CD8-positive, alpha-beta T cell (primary cell): ENCODE measurements at regions of chr18 and their contacts with region 1.

Region 1: GRCh38 chr18:69958422-69958821 is 10.7 kb upstream of the CD226 start:
- DNase-seq: peak in 2 of 9 experiments; percentile 22 to 39
- ATAC-seq: no peak
- H3K4me3 ChIP-seq: no peak overlapping the region
- H3K4me3 Mint-ChIP-seq: no peak overlapping the region
- H3K27ac ChIP-seq: no peak overlapping the region
- H3K27ac Mint-ChIP-seq: no peak overlapping the region
- H3K4me1 ChIP-seq: peaks cover 23% of the 10 kb centered on the region
- H3K4me1 Mint-ChIP-seq: peaks cover 25% of the 10 kb centered on the region
- H3K27me3 ChIP-seq: no peaks in the 10 kb centered on the region
- H3K27me3 Mint-ChIP-seq: no peaks in the 10 kb centered on the region
- CTCF ChIP-seq: no peak

Region 2: GRCh38 chr18:69935319-69936190 is 22.9 kb before region 1 on chr18:
- CTCF ChIA-PET with region 1: interaction called, 9 read pairs
- POLR2A ChIA-PET with region 1: interaction called, 8 read pairs
- intact Hi-C with region 1: loop called in 1 of 2 experiments (anchors 1 kb)
- DNase-seq: peak; percentile 64 to 95 (median 80)
- ATAC-seq: peak; percentile 96
- H3K4me3 ChIP-seq: peak overlapping the region; percentile 1 to 18
- H3K4me3 Mint-ChIP-seq: no peak overlapping the region
- H3K27ac ChIP-seq: peak overlapping the region; percentile 25 to 63
- H3K27ac Mint-ChIP-seq: no peak overlapping the region
- H3K4me1 ChIP-seq: peaks cover 75% of the 10 kb centered on the region
- H3K4me1 Mint-ChIP-seq: peaks cover 38% of the 10 kb centered on the region
- H3K27me3 ChIP-seq: no peaks in the 10 kb centered on the region
- H3K27me3 Mint-ChIP-seq: no peaks in the 10 kb centered on the region
- CTCF ChIP-seq: no peak

Region 3: DNA sequence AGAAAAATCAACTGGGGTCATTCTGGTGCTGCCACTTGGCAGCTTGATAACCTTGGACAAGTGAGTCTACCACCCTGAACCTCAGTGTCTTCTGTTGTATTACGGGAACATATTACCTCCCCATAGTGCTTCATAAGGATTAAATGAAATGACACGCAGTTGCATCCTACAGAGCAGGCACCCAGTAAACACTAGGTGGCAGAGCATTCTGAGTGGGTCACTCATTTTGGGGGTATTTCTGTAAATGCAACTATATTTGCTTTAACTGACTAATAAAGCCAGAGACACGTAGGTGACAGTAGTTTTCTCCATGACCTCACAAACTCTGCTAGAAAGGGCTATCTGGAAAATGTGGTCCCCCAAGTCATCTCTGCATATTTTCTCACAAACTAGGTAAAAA is 15.4 kb before region 1 on chr18:
- CTCF ChIA-PET with region 1: interaction called, 5 read pairs
- POLR2A ChIA-PET with region 1: interaction called, 5 read pairs
- intact Hi-C with region 1: loop called in 1 of 2 experiments (anchors 2 kb)
- DNase-seq: peak in 2 of 9 experiments; percentile 42 to 54
- ATAC-seq: peak; percentile 30
- H3K4me3 ChIP-seq: no peak overlapping the region
- H3K4me3 Mint-ChIP-seq: peak overlapping the region; percentile 62
- H3K27ac ChIP-seq: peak overlapping the region in 1 of 2 experiments; percentile 42
- H3K27ac Mint-ChIP-seq: peak overlapping the region; percentile 84
- H3K4me1 ChIP-seq: peaks cover 74% of the 10 kb centered on the region
- H3K4me1 Mint-ChIP-seq: peaks cover 69% of the 10 kb centered on the region
- H3K27me3 ChIP-seq: no peaks in the 10 kb centered on the region
- H3K27me3 Mint-ChIP-seq: no peaks in the 10 kb centered on the region
- CTCF ChIP-seq: peak; percentile 15

Region 4: GRCh38 chr18:69992776-69993175 is 34.4 kb after region 1 on chr18:
- CTCF ChIA-PET with region 1: interaction called, 3 read pairs
- POLR2A ChIA-PET with region 1: no interaction called
- intact Hi-C with region 1: loop called in 1 of 2 experiments (anchors 5 kb)
- DNase-seq: no peak
- ATAC-seq: no peak
- H3K4me3 ChIP-seq: no peak overlapping the region
- H3K4me3 Mint-ChIP-seq: no peak overlapping the region
- H3K27ac ChIP-seq: no peak overlapping the region
- H3K27ac Mint-ChIP-seq: no peak overlapping the region
- H3K4me1 ChIP-seq: no peaks in the 10 kb centered on the region
- H3K4me1 Mint-ChIP-seq: peaks cover 5% of the 10 kb centered on the region
- H3K27me3 ChIP-seq: no peaks in the 10 kb centered on the region
- H3K27me3 Mint-ChIP-seq: no peaks in the 10 kb centered on the region
- CTCF ChIP-seq: no peak

Region 5: GRCh38 chr18:70028734-70029133 is 70.3 kb after region 1 on chr18:
- CTCF ChIA-PET with region 1: no interaction called
- POLR2A ChIA-PET with region 1: no interaction called
- intact Hi-C with region 1: no loop called
- DNase-seq: no peak
- ATAC-seq: no peak
- H3K4me3 ChIP-seq: no peak overlapping the region
- H3K4me3 Mint-ChIP-seq: no peak overlapping the region
- H3K27ac ChIP-seq: no peak overlapping the region
- H3K27ac Mint-ChIP-seq: no peak overlapping the region
- H3K4me1 ChIP-seq: no peaks in the 10 kb centered on the region
- H3K4me1 Mint-ChIP-seq: no peaks in the 10 kb centered on the region
- H3K27me3 ChIP-seq: no peaks in the 10 kb centered on the region
- H3K27me3 Mint-ChIP-seq: no peaks in the 10 kb centered on the region
- CTCF ChIP-seq: no peak